ENCODE measurements at regions of chr1 and their contacts with region 1.

Region 1: DNA sequence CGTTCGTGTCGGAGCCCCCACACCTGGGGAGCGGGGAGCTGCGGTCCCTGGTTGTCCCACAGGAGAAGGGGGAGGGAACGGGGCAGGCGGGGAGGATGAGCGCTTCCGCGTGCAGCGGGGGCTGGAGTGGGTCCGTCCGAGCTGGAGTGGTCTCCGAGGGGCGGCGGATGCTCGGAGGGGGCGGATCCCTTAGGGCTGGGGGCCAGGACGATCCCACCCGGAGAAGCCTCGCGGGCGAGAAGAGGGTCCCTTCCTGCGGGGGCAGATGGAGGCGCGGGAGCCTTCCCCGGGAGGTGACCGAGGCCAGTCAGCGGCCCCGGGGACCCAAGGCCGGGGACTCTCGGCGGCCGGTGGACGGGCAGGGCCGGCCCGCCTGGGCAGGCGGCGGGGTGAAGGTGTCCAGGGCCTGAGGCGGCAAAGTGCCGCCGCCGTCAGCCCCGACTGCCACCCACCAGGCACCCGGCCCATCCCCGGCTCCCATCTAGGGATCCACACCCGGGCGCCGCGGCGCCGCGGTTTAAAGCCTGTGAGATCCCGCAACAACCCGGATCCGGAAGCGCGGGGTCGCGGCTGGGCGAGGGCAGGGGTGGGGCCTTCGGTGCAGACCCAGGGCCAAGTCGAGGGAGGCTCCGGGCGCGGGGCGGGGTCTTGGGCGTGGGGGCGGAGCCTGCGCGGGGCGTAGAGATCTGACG is 5.3 kb upstream of the CCDC27 start:
- DNase-seq: peak; percentile 72
- H3K4me3 ChIP-seq: peak overlapping the region; percentile 58 to 68
- H3K27ac ChIP-seq: peak overlapping the region; percentile 64 to 65
- H3K4me1 ChIP-seq: peaks cover 4% of the 10 kb centered on the region
- H3K27me3 ChIP-seq: no peaks in the 10 kb centered on the region
- CTCF ChIP-seq: no peak
- POLR2A ChIP-seq: peak; percentile 52

Region 2: DNA sequence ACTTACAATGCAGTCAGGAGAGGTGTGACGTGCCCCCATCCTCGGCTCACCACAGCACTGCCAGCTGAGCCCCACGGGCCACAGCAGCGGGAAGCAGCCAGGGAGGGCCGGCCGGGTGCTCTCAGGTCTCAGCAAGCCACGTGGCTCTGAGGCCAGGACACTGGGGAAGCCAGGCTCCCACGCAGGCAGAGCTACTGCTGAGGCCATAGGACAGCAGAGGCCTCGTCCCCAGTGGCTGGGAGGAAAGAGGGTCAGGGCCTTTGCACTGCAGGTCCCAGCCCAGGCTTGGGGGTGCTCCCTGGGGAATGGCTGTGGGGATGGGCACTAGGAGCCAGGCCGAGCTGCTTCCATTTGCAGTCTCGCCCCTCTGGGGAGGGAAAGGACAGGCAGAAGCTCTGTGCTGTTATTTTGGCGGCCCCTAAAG is 43.5 kb after region 1 on chr1:
- intact Hi-C with region 1: loop called (anchors 5 kb)
- DNase-seq: no peak
- H3K4me3 ChIP-seq: no peak overlapping the region
- H3K27ac ChIP-seq: no peak overlapping the region
- H3K4me1 ChIP-seq: peaks cover 22% of the 10 kb centered on the region
- H3K27me3 ChIP-seq: no peaks in the 10 kb centered on the region
- CTCF ChIP-seq: no peak
- POLR2A ChIP-seq: no peak

Region 3: GRCh38 chr1:3954170-3955169 is 207.5 kb after region 1 on chr1:
- intact Hi-C with region 1: no loop called
- DNase-seq: no peak
- H3K4me3 ChIP-seq: no peak overlapping the region
- H3K27ac ChIP-seq: no peak overlapping the region
- H3K4me1 ChIP-seq: no peaks in the 10 kb centered on the region
- H3K27me3 ChIP-seq: no peaks in the 10 kb centered on the region
- CTCF ChIP-seq: no peak
- POLR2A ChIP-seq: no peak

Measured in prostate gland (tissue), 2 donors.